ENCODE measurements at regions of chr12 and their contacts with region 1.

Region 1: GRCh38 chr12:103877934-103878510 is 37.0 kb upstream of the NT5DC3 start:
- DNase-seq: peak; percentile 18 to 58
- ATAC-seq: peak; percentile 83 to 92 (median 86)
- H3K4me3 ChIP-seq: no peak overlapping the region
- H3K27ac ChIP-seq: no peak overlapping the region
- H3K4me1 ChIP-seq: no peaks in the 10 kb centered on the region
- H3K27me3 ChIP-seq: no peaks in the 10 kb centered on the region
- CTCF ChIP-seq: peak; percentile 72

Region 2: DNA sequence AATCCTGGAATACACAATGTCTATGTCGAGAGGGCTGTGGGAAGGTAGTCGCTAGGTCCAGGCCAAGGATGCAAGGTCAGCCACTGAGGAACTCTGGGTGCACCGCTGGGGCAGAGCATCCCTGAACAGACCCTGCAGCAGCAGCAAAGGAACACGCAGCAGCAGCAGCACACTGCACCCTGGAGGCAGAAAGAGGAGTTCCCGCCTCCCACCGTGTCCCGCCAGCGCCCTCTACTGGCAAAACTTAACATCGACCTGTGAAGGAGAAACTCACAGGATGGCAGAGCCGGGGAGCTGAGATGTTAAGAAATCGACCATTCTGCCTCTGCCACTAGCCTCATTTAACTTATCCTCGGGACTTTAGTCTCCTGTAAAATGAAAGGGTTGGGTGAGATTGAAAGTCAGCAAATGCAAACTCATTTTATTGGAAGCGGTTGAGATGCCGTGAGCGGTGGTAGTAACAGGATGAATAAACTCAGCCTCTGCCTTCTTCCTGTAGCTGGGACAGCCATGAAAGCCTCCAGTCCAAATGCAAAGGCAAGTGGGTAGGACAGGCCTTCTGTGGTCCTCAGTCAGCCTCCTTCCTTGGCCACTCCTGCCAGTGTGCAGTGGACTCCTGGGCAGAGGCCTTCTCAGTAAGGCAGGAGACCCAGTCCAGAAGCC is 245.3 kb before region 1 on chr12:
- intact Hi-C with region 1: loop called in 1 of 2 experiments (anchors 5 kb)
- DNase-seq: peak; percentile 18 to 56
- ATAC-seq: peak in 2 of 4 donors; percentile 33 to 44
- H3K4me3 ChIP-seq: no peak overlapping the region
- H3K27ac ChIP-seq: no peak overlapping the region
- H3K4me1 ChIP-seq: peaks cover 3% of the 10 kb centered on the region
- H3K27me3 ChIP-seq: no peaks in the 10 kb centered on the region
- CTCF ChIP-seq: peak; percentile 43

Region 3: GRCh38 chr12:103771466-103771865 is 106.6 kb before region 1 on chr12:
- intact Hi-C with region 1: loop called (anchors 5 to 10 kb)
- DNase-seq: peak; percentile 27 to 60
- ATAC-seq: peak; percentile 72 to 94 (median 82)
- H3K4me3 ChIP-seq: no peak overlapping the region
- H3K27ac ChIP-seq: no peak overlapping the region
- H3K4me1 ChIP-seq: peaks cover 6% of the 10 kb centered on the region
- H3K27me3 ChIP-seq: no peaks in the 10 kb centered on the region
- CTCF ChIP-seq: peak; percentile 52

Region 4: GRCh38 chr12:103833891-103834290 is 44.1 kb before region 1 on chr12:
- intact Hi-C with region 1: no loop called
- DNase-seq: no peak
- ATAC-seq: peak in 1 of 4 donors; percentile 37
- H3K4me3 ChIP-seq: no peak overlapping the region
- H3K27ac ChIP-seq: no peak overlapping the region
- H3K4me1 ChIP-seq: peaks cover 4% of the 10 kb centered on the region
- H3K27me3 ChIP-seq: no peaks in the 10 kb centered on the region
- CTCF ChIP-seq: no peak

Region 5: DNA sequence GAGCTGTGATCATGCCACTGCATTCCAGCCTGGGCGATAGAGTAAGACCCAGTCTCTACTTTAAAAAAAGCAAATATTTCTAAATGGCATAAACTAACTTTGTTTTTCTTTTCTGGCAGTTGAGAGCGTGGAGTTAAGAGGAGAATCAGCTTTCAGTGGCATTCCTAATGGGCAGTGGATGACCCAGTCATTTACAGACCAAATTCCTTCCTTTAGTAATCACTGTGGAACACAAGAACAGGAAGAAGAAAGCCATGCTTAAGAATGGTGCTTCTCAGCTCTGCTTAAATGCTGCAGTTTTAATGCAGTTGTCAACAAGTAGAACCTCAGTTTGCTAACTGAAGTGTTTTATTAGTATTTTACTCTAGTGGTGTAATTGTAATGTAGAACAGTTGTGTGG is 108.8 kb after region 1 on chr12:
- intact Hi-C with region 1: no loop called
- DNase-seq: no peak
- ATAC-seq: no peak
- H3K4me3 ChIP-seq: no peak overlapping the region
- H3K27ac ChIP-seq: no peak overlapping the region
- H3K4me1 ChIP-seq: no peaks in the 10 kb centered on the region
- H3K27me3 ChIP-seq: no peaks in the 10 kb centered on the region
- CTCF ChIP-seq: no peak

Region 6: GRCh38 chr12:104057771-104058197 is 179.8 kb after region 1 on chr12:
- intact Hi-C with region 1: loop called in 1 of 2 experiments (anchors 5 kb)
- DNase-seq: no peak
- ATAC-seq: peak in 3 of 4 donors; percentile 33 to 60 (median 58)
- H3K4me3 ChIP-seq: no peak overlapping the region
- H3K27ac ChIP-seq: no peak overlapping the region
- H3K4me1 ChIP-seq: peaks cover 16% of the 10 kb centered on the region
- H3K27me3 ChIP-seq: no peaks in the 10 kb centered on the region
- CTCF ChIP-seq: peak; percentile 60